ENCODE measurements at regions of chr17 and their contacts with region 1.

Region 1: DNA sequence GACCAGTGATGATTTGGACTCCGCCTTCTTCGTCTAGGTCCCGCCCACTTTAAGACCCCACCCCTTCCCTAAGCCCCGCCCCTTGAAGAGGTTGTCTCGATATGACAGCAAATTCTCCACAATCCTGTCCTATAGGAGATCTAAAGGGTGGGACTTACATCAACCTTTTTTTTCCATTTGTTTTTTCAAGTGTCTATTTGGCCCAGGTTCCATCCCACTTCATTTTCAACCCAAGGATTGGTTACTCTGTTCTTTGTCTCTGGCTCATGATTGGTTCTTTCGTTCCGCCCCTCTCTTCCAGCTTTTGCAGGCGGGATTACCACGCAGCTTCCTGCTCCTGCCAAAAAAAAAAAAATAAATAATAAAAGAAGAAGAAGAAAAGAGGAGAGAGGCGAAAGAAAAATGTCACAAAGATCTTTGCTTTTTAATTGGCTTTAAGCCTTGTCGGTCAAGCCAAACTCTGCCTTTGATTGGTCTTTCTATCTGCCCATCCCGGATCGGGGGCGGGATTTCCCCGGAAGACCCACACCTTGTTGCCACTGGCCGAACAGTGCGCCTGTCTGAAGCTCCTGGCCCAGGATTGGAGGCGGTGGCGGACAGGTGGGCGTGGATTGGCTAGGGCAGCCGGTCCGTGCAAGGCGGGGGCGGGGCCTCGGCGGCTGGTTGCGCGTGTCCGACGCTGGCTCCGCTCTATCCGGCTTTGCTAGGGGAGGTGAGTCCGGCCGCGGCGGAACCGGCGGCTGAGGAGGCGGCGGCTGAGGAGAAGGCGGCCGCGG is 1.2 kb upstream of the NLK start:
- DNase-seq: peak; percentile 97 to 100 (median 99)
- ATAC-seq: peak; percentile 91
- H3K4me3 ChIP-seq: peak overlapping the region; percentile 62 to 76
- H3K4me3 Mint-ChIP-seq: peak overlapping the region; percentile 87
- H3K27ac ChIP-seq: peak overlapping the region; percentile 24 to 77
- H3K27ac Mint-ChIP-seq: peak overlapping the region; percentile 89
- H3K4me1 ChIP-seq: peaks cover 27% of the 10 kb centered on the region
- H3K4me1 Mint-ChIP-seq: peaks cover 53% of the 10 kb centered on the region
- H3K27me3 ChIP-seq: no peaks in the 10 kb centered on the region
- H3K27me3 Mint-ChIP-seq: no peaks in the 10 kb centered on the region
- CTCF ChIP-seq: no peak

Region 2: GRCh38 chr17:28071891-28072606 is 30.8 kb after region 1 on chr17:
- CTCF ChIA-PET with region 1: no interaction called
- POLR2A ChIA-PET with region 1: interaction called, 8 read pairs
- intact Hi-C with region 1: loop called in 1 of 2 experiments (anchors 1 kb)
- DNase-seq: peak in 3 of 9 experiments; percentile 21 to 67 (median 45)
- ATAC-seq: peak; percentile 83
- H3K4me3 ChIP-seq: no peak overlapping the region
- H3K4me3 Mint-ChIP-seq: peak overlapping the region; percentile 54
- H3K27ac ChIP-seq: peak overlapping the region in 1 of 2 experiments; percentile 43
- H3K27ac Mint-ChIP-seq: peak overlapping the region; percentile 81
- H3K4me1 ChIP-seq: peaks cover 27% of the 10 kb centered on the region
- H3K4me1 Mint-ChIP-seq: peaks cover 56% of the 10 kb centered on the region
- H3K27me3 ChIP-seq: no peaks in the 10 kb centered on the region
- H3K27me3 Mint-ChIP-seq: no peaks in the 10 kb centered on the region
- CTCF ChIP-seq: no peak

Region 3: GRCh38 chr17:28118362-28118761 is 77.1 kb after region 1 on chr17:
- CTCF ChIA-PET with region 1: no interaction called
- POLR2A ChIA-PET with region 1: no interaction called
- intact Hi-C with region 1: loop called in 1 of 2 experiments (anchors 5 kb)
- DNase-seq: peak in 1 of 9 experiments; percentile 5
- ATAC-seq: no peak
- H3K4me3 ChIP-seq: no peak overlapping the region
- H3K4me3 Mint-ChIP-seq: peak overlapping the region; percentile 38
- H3K27ac ChIP-seq: no peak overlapping the region
- H3K27ac Mint-ChIP-seq: peak overlapping the region; percentile 37
- H3K4me1 ChIP-seq: peaks cover 13% of the 10 kb centered on the region
- H3K4me1 Mint-ChIP-seq: peaks cover 43% of the 10 kb centered on the region
- H3K27me3 ChIP-seq: no peaks in the 10 kb centered on the region
- H3K27me3 Mint-ChIP-seq: no peaks in the 10 kb centered on the region
- CTCF ChIP-seq: no peak

Region 4: DNA sequence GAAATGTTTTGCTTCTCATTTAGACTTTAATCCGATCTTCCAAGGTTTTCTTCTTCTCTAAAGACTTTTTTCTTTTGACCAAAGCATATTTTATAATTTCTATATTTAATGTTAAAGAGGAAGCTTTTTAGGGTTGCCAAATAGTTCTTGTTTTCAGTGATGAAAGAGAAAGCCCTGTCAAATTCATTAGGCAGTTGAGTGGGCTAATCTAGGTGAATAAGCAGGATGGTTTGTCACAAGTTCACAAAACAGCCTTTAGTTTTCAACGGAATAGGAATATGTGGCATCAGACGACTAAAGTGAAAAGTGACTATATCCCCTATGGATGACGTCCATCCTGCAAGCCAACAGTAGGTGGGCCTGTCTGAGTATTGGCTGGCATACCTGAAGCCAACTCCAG is 120.1 kb after region 1 on chr17:
- CTCF ChIA-PET with region 1: no interaction called
- POLR2A ChIA-PET with region 1: no interaction called
- intact Hi-C with region 1: no loop called
- DNase-seq: no peak
- ATAC-seq: no peak
- H3K4me3 ChIP-seq: no peak overlapping the region
- H3K4me3 Mint-ChIP-seq: no peak overlapping the region
- H3K27ac ChIP-seq: no peak overlapping the region
- H3K27ac Mint-ChIP-seq: no peak overlapping the region
- H3K4me1 ChIP-seq: no peaks in the 10 kb centered on the region
- H3K4me1 Mint-ChIP-seq: no peaks in the 10 kb centered on the region
- H3K27me3 ChIP-seq: no peaks in the 10 kb centered on the region
- H3K27me3 Mint-ChIP-seq: no peaks in the 10 kb centered on the region
- CTCF ChIP-seq: no peak

Region 5: DNA sequence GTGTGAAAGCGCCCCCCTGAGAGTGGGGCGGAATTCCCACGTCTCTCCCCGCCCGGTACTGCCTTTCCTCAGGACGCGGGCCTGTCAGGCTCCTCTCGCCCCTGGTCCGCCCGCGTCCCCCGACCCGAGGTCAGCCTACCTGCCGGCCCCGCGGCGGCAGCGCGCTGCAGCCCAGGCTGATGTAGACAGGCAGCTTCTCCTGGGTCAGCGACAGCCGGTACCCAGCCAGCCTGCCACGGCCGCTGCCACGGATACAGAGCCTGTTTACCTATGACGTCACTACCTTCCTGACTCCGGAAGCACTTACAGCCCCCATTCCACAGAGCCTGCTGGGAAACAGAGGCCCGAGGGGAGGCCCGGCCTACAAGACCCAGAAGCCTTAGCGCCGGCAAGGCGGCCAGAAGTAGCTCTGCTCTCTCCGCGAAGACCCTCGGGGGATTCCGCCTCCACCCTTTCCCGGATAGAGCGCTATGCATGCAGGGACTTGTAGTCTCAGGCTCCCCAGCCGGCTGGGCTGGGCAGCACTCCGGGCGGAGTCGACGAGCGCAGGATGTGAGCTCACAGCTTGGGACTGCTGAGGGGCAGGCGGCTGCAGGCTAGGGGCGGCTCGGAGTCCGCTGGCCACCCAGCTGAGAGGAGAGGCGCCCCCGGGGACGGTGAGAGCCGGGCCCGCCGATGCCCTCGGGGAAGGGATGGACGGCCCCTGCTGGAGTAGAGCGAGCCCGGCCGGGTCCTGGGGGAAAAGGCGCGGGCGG is 294.1 kb after region 1 on chr17 and contains the starts of genes IFT20 and TNFAIP1:
- CTCF ChIA-PET with region 1: no interaction called
- POLR2A ChIA-PET with region 1: interaction called, 8 read pairs
- intact Hi-C with region 1: loop called in 1 of 2 experiments (anchors 1 kb)
- DNase-seq: peak; percentile 94 to 100 (median 97)
- ATAC-seq: peak; percentile 96
- H3K4me3 ChIP-seq: peak within 1 kb of the TSS; percentile 80 to 95
- H3K4me3 Mint-ChIP-seq: peak within 1 kb of the TSS; percentile 99
- H3K27ac ChIP-seq: peak within 1 kb of the TSS; percentile 92 to 97
- H3K27ac Mint-ChIP-seq: peak within 1 kb of the TSS; percentile 97
- H3K4me1 ChIP-seq: peaks cover 22% of the 10 kb centered on the region
- H3K4me1 Mint-ChIP-seq: peaks cover 41% of the 10 kb centered on the region
- H3K27me3 ChIP-seq: no peaks in the 10 kb centered on the region
- H3K27me3 Mint-ChIP-seq: no peaks in the 10 kb centered on the region
- CTCF ChIP-seq: no peak
- total RNA-seq, gene IFT20: 32.5 to 34.6 TPM
- total RNA-seq, gene TNFAIP1: 15.3 to 15.5 TPM